GM10248 (cell line): ENCODE measurements at regions of chr1 and their contacts with region 1.

Region 1: DNA sequence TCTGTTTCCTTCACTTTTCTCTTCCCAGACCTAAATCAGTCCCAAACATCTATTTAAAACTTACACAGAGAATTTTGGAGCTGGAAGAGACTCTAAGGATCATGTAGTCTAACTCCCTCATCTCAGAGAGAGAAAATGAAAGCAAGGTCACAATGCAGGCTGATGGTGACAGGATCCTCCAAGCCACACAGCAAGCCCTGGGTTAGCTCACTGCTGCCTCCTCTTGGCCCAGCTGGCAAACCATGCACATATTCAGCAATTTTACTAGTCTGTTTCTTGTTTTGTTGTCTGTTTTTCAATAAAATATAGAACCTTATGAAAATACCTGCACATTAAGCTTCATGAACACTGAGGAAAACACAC is 27.7 kb upstream of the LY9 start:
- DNase-seq: peak; percentile 77
- CTCF ChIP-seq: peak; percentile 93

Region 2: GRCh38 chr1:160451119-160451858 is 317.0 kb before region 1 on chr1:
- CTCF ChIA-PET with region 1: no interaction called
- POLR2A ChIA-PET with region 1: no interaction called
- DNase-seq: no peak
- CTCF ChIP-seq: no peak

Region 3: DNA sequence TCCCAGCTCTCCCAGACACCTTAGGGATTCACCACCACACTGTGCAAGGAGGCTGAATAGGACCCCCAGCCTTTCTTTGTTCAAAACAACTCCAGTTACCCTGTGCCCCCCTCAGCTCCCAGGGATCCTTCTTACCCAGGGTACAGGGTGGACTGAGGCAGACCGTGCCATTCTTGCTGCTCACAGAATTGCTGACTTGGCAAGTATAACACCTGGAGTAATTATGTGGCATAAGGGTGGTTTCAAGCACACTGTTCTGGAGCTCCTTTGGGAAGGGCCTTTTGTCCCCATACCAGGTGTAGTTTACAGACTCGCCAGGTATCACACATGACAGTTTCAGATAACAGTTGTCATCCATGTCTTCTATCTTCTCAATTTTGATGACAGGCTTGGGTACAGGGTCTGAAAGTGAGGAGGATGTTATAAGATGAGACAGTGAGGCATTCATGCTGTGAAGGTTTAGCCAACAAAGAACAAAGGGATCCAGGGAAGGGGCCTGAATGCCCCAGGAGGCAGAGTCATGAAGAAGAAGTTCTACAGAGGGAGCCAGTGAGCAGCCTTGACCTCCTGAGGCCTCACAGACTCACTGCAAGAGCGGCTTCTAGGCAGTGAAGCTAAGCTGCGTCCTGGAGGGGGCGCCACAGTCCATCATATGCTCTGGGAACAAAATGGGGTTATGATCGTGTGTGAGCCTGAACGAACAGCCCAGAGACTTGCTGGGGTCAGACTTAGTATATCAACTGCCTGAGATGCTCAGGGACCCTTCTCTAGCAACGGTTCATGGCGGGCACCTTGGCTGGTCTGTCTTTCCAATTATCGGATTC is 87.0 kb before region 1 on chr1:
- CTCF ChIA-PET with region 1: interaction called, 30 read pairs
- POLR2A ChIA-PET with region 1: no interaction called
- DNase-seq: peak; percentile 55
- CTCF ChIP-seq: peak; percentile 93

Region 4: GRCh38 chr1:160739098-160739511 is 29.2 kb before region 1 on chr1 and contains the start of gene SLAMF7:
- CTCF ChIA-PET with region 1: interaction called, 67 read pairs
- POLR2A ChIA-PET with region 1: interaction called, 5 read pairs
- DNase-seq: peak; percentile 52
- CTCF ChIP-seq: no peak

Region 5: DNA sequence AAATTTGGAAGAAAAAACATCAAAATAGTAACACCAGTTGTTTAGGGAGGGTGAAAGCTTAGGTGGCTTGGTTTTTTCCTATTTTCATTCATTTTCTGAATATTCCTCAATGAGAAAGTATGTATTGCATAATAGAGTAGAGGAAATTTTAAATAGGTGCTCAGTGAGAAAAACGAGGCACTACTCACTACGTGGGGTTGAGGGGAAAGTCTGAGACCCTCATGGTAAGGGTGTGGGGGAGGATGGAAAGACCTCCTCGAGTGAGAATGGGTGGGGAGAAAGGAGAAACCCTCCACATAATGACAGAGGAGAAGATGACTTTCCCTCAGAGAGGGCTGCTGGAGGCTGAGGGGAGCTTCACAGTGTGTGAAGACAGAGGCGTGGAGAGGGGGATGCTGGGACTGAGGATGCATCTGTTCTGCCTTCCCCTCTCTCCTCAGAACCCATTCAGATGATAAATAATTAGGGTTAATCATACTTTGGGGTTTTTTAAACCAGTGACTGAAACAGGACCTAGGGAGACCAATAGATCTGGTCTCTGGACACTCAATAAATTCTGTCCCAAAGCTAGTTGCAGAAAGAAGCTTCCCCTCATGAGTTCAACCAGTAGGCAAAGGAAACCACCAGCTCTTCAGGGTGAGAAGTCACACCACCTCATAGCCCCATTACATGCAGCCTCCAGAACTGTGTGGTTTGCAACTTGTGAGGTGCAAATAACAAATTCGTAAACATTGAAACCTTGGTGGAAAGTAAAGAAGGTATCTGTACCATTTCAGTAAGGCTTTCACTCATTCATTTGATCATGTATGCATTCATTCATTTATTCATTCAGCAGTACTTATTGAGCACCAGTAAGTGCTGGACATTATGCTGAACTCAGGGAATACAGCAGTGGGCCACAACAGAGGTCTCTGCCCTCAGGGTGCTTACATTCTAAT is 12.1 kb before region 1 on chr1:
- CTCF ChIA-PET with region 1: interaction called, 44 read pairs
- POLR2A ChIA-PET with region 1: interaction called, 4 read pairs
- DNase-seq: no peak
- CTCF ChIP-seq: no peak

Region 6: GRCh38 chr1:160795951-160796383 is 27.7 kb after region 1 on chr1 and contains the start of gene LY9:
- CTCF ChIA-PET with region 1: interaction called, 30 read pairs
- POLR2A ChIA-PET with region 1: no interaction called
- DNase-seq: peak; percentile 74
- CTCF ChIP-seq: no peak

Region 7: GRCh38 chr1:160837558-160838205 is 69.4 kb after region 1 on chr1:
- CTCF ChIA-PET with region 1: interaction called, 81 read pairs
- POLR2A ChIA-PET with region 1: no interaction called
- DNase-seq: peak; percentile 73
- CTCF ChIP-seq: peak; percentile 41